T-cell (primary cell): ENCODE measurements at regions of chr12 and their contacts with region 1.

Region 1: GRCh38 chr12:32737715-32738114 is 18.0 kb downstream of the YARS2 start:
- DNase-seq: no peak
- ATAC-seq: no peak
- H3K4me3 ChIP-seq: no peak overlapping the region
- H3K4me3 Mint-ChIP-seq: no peak overlapping the region
- H3K27ac ChIP-seq: no peak overlapping the region
- H3K27ac Mint-ChIP-seq: no peak overlapping the region
- H3K4me1 ChIP-seq: no peaks in the 10 kb centered on the region
- H3K4me1 Mint-ChIP-seq: peaks cover 3 to 10% (median 7%) of the 10 kb centered on the region in 3 donors
- H3K27me3 ChIP-seq: no peaks in the 10 kb centered on the region
- H3K27me3 Mint-ChIP-seq: no peaks in the 10 kb centered on the region

Region 2: GRCh38 chr12:30953951-30954751 is 1783.6 kb before region 1 on chr12:
- CTCF ChIA-PET with region 1: interaction called in 1 of 2 experiments, 11 read pairs
- POLR2A ChIA-PET with region 1: no interaction called
- DNase-seq: no peak
- ATAC-seq: no peak
- H3K4me3 ChIP-seq: no peak overlapping the region
- H3K4me3 Mint-ChIP-seq: no peak overlapping the region
- H3K27ac ChIP-seq: no peak overlapping the region
- H3K27ac Mint-ChIP-seq: no peak overlapping the region
- H3K4me1 ChIP-seq: no peaks in the 10 kb centered on the region
- H3K4me1 Mint-ChIP-seq: no peaks in the 10 kb centered on the region
- H3K27me3 ChIP-seq: peaks cover 0 to 7% of the 10 kb centered on the region in 2 experiments
- H3K27me3 Mint-ChIP-seq: peaks cover 12 to 17% of the 10 kb centered on the region in 2 donors

Region 3: GRCh38 chr12:32583534-32583933 is 154.2 kb before region 1 on chr12:
- CTCF ChIA-PET with region 1: no interaction called
- POLR2A ChIA-PET with region 1: no interaction called
- DNase-seq: no peak
- ATAC-seq: no peak
- H3K4me3 ChIP-seq: no peak overlapping the region
- H3K4me3 Mint-ChIP-seq: no peak overlapping the region
- H3K27ac ChIP-seq: no peak overlapping the region
- H3K27ac Mint-ChIP-seq: no peak overlapping the region
- H3K4me1 ChIP-seq: peaks cover 3 to 6% of the 10 kb centered on the region in 2 experiments
- H3K4me1 Mint-ChIP-seq: peaks cover 16 to 26% (median 19%) of the 10 kb centered on the region in 3 donors
- H3K27me3 ChIP-seq: no peaks in the 10 kb centered on the region
- H3K27me3 Mint-ChIP-seq: peaks cover 0 to 2% of the 10 kb centered on the region in 2 donors

Region 4: GRCh38 chr12:34033628-34034282 is 1296.0 kb after region 1 on chr12:
- CTCF ChIA-PET with region 1: interaction called in 1 of 2 experiments, 11 read pairs
- POLR2A ChIA-PET with region 1: no interaction called
- DNase-seq: peak in 1 of 35 experiments; percentile 49
- ATAC-seq: no peak
- H3K4me3 ChIP-seq: no peak overlapping the region
- H3K4me3 Mint-ChIP-seq: no peak overlapping the region
- H3K27ac ChIP-seq: no peak overlapping the region
- H3K27ac Mint-ChIP-seq: no peak overlapping the region
- H3K4me1 ChIP-seq: no peaks in the 10 kb centered on the region
- H3K4me1 Mint-ChIP-seq: no peaks in the 10 kb centered on the region
- H3K27me3 ChIP-seq: no peaks in the 10 kb centered on the region
- H3K27me3 Mint-ChIP-seq: no peaks in the 10 kb centered on the region